ENCODE measurements at regions of chr19 and their contacts with region 1.

Region 1: GRCh38 chr19:1875646-1876495 is 9.4 kb downstream of the ABHD17A start:
- DNase-seq: peak in 1 of 2 experiments; percentile 89
- ATAC-seq: peak; percentile 93 to 97
- H3K4me3 ChIP-seq: peak overlapping the region; percentile 88
- H3K27ac ChIP-seq: peak overlapping the region; percentile 88 to 95
- H3K4me1 ChIP-seq: peaks cover 14% of the 10 kb centered on the region
- CTCF ChIP-seq: no peak
- EP300 ChIP-seq: no peak
- POLR2A ChIP-seq: peak; percentile 93
- RAD21 ChIP-seq: no peak

Region 2: GRCh38 chr19:1863726-1864480 is 12.0 kb before region 1 on chr19:
- CTCF ChIA-PET with region 1: interaction called, 10 read pairs
- POLR2A ChIA-PET with region 1: interaction called, 4 read pairs
- DNase-seq: peak in 1 of 2 experiments; percentile 94
- ATAC-seq: peak; percentile 54 to 67
- H3K4me3 ChIP-seq: peak overlapping the region; percentile 68
- H3K27ac ChIP-seq: peak overlapping the region; percentile 99 to 100
- H3K4me1 ChIP-seq: peaks cover 29% of the 10 kb centered on the region
- CTCF ChIP-seq: no peak
- EP300 ChIP-seq: no peak
- POLR2A ChIP-seq: no peak
- RAD21 ChIP-seq: no peak

Measured in A549 (cell line).